Stomach (tissue), 19 donors: ENCODE measurements at regions of chr7 and their contacts with region 1.

Region 1: DNA sequence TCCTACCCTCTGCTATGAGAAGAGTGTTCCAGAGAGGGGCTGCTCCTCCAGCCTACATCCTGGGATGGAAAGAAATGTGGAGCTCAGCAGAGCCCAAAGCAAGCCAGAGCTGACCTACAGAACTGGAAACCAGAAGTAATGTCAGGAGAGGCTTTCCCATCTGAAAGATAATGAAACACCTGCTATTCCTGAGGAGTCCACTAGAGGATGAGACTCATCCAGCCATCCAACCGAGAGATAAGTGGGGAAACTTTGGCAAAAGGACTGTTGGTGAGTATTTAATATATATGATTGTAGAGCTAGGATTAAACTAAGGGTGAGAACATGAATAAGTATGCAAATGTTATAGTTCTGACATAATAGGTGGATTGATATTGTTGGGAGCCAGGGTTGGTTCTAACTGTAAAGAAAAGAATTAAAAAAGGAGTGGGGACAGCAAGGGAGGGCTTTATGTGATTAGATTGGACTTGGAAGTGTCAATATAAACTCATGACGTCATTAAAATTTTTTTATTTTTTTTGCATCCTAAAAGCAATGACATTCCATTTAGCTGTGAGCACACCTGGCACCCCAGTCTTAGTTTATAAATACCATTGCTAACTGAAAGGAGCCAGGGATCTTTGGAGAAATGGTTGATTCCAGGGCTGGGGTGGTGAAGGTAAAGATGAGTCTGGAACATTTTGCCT is 312.8 kb upstream of the NFE2L3 start:
- DNase-seq: no peak
- H3K4me3 ChIP-seq: no peak overlapping the region
- H3K27ac ChIP-seq: peak overlapping the region in 1 of 5 donors; percentile 14
- H3K4me1 ChIP-seq: peaks cover 0 to 11% (median 0%) of the 10 kb centered on the region in 4 donors
- H3K27me3 ChIP-seq: peaks cover 0 to 57% (median 14%) of the 10 kb centered on the region in 3 donors
- CTCF ChIP-seq: no peak
- EP300 ChIP-seq: no peak
- POLR2A ChIP-seq: no peak

Region 2: DNA sequence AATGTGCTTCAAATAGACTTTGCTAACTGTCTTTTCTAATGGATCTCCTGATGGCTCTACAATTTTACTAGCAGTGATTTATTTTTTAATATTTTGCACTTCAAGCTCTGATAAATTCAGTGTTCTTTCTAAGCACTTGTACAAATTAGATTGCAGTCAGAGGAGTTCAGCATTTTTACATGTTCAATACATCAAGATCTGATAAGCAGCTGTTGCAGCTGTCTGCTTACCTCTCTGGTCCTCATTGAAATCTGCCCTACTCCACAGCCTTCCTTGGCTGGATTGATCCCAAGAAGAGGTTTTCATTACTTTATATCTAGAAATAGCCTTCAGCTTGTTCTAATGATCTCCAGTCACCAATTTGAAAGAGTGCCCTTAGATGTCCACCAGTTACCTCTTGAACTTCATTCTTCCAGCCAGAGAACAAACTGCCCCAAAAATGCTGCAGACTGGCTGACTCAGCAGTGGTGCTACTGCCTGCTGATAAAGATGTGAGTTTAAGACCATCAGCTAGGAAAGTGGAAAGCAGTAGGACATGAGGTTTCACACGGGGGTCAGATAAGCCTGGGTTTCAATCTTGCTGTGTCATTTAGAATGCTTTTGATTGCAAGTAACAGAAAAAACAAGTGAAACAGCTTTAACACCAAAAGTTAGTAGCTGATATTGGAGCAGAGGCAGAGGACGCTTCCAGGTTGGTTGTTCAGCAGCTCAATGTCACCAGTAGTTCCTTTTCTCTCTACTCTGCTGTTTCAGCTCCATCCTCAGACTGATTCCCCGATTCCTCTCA is 260.0 kb before region 1 on chr7:
- intact Hi-C with region 1: loop called (anchors 10 kb)
- DNase-seq: no peak
- H3K4me3 ChIP-seq: no peak overlapping the region
- H3K27ac ChIP-seq: no peak overlapping the region
- H3K4me1 ChIP-seq: no peaks in the 10 kb centered on the region
- H3K27me3 ChIP-seq: no peaks in the 10 kb centered on the region
- CTCF ChIP-seq: no peak
- EP300 ChIP-seq: no peak
- POLR2A ChIP-seq: no peak